Caco-2 (cell line): ENCODE measurements at regions of chr13 and their contacts with region 1.

Region 1: GRCh38 chr13:42594970-42595571 is 21.1 kb downstream of the TNFSF11 start:
- DNase-seq: peak; percentile 53 to 65
- H3K4me3 ChIP-seq: no peak overlapping the region
- H3K4me3 Mint-ChIP-seq: no peak overlapping the region
- H3K27ac Mint-ChIP-seq: no peak overlapping the region
- H3K4me1 ChIP-seq: no peaks in the 10 kb centered on the region
- H3K4me1 Mint-ChIP-seq: no peaks in the 10 kb centered on the region
- H3K27me3 ChIP-seq: no peaks in the 10 kb centered on the region
- H3K27me3 Mint-ChIP-seq: peaks cover 23% of the 10 kb centered on the region
- CTCF ChIP-seq: peak; percentile 87 to 89

Region 2: DNA sequence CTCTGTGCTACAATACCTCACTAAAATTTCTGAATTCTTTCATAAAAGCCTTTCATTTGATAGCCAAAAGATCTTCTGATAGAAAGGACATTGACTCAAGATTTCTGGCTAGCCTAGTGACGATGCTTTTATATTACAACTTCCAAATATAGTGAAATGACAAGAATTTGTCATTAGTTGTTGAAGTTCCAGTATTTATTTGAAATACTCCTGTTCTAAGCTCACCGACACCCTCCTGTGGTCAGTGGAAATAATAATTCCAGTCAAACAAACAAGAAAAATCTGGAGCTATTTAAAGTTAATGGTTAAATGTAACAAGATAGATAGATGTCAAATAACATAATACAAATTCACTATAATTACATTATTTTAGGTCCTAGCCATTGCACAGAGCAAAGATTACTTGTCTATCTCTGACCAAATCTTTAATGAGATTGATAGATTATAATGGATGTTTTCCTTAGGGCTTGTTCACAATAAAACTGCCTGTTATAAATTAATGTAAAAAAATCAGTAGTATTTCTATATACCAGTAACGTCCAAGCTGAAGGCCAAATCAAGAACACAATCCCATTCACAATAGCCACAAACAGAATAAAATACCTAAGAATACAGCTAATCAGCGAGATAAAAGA is 942.2 kb before region 1 on chr13:
- CTCF ChIA-PET with region 1: no interaction called
- POLR2A ChIA-PET with region 1: no interaction called
- intact Hi-C with region 1: no loop called
- DNase-seq: peak in 1 of 2 experiments; percentile 63
- H3K4me3 ChIP-seq: no peak overlapping the region
- H3K4me3 Mint-ChIP-seq: no peak overlapping the region
- H3K27ac Mint-ChIP-seq: peak overlapping the region; percentile 76
- H3K4me1 ChIP-seq: peaks cover 47% of the 10 kb centered on the region
- H3K4me1 Mint-ChIP-seq: peaks cover 27% of the 10 kb centered on the region
- H3K27me3 ChIP-seq: no peaks in the 10 kb centered on the region
- H3K27me3 Mint-ChIP-seq: no peaks in the 10 kb centered on the region
- CTCF ChIP-seq: peak; percentile 66 to 74

Region 3: GRCh38 chr13:42812316-42812715 is 217.2 kb after region 1 on chr13:
- CTCF ChIA-PET with region 1: no interaction called
- POLR2A ChIA-PET with region 1: no interaction called
- intact Hi-C with region 1: loop called (anchors 1 kb)
- DNase-seq: peak in 1 of 2 experiments; percentile 29
- H3K4me3 ChIP-seq: no peak overlapping the region
- H3K4me3 Mint-ChIP-seq: no peak overlapping the region
- H3K27ac Mint-ChIP-seq: no peak overlapping the region
- H3K4me1 ChIP-seq: no peaks in the 10 kb centered on the region
- H3K4me1 Mint-ChIP-seq: no peaks in the 10 kb centered on the region
- H3K27me3 ChIP-seq: no peaks in the 10 kb centered on the region
- H3K27me3 Mint-ChIP-seq: peaks cover 6% of the 10 kb centered on the region
- CTCF ChIP-seq: peak in 1 of 2 experiments; percentile 19

Region 4: DNA sequence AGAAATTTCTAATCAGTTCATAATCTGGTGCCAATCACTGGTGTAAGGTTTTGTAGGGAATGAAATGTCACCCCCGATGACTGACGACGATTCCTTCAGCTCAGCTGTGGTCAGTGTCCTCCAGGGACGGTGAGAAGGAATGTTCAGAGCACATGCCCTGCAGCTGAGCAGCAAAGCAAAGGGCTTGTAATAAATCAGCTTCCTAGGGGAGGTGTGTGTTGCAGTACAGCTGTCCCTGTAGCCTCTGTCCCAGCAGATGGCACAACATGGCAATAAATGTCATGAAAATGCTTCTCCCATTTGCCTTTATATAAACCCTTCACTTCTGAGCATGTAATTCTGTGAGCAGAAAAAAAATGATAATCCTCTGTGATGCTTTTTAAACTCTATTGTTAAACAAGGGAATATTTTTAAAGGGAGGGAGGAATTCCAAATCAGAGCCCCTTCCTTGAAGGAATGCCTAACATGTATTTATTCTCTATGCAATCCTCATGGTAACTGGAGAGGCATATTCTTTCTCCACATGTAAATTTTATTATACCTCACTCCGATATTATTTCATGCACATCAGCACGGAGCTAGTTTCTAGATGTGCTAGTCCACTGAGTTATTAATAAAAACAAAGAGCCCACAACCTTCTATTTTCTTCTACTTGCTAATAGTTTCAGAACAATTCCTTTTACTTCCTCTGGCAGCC is 288.8 kb after region 1 on chr13:
- CTCF ChIA-PET with region 1: no interaction called
- POLR2A ChIA-PET with region 1: no interaction called
- intact Hi-C with region 1: loop called (anchors 10 kb)
- DNase-seq: peak; percentile 43 to 46
- H3K4me3 ChIP-seq: no peak overlapping the region
- H3K4me3 Mint-ChIP-seq: no peak overlapping the region
- H3K27ac Mint-ChIP-seq: no peak overlapping the region
- H3K4me1 ChIP-seq: peaks cover 8% of the 10 kb centered on the region; the same call in 1 of the 2 replicates
- H3K4me1 Mint-ChIP-seq: no peaks in the 10 kb centered on the region
- H3K27me3 ChIP-seq: no peaks in the 10 kb centered on the region
- H3K27me3 Mint-ChIP-seq: no peaks in the 10 kb centered on the region
- CTCF ChIP-seq: peak in 1 of 2 experiments; percentile 51

Region 5: GRCh38 chr13:43544011-43544410 is 948.9 kb after region 1 on chr13:
- CTCF ChIA-PET with region 1: no interaction called
- POLR2A ChIA-PET with region 1: no interaction called
- intact Hi-C with region 1: no loop called
- DNase-seq: no peak
- H3K4me3 ChIP-seq: no peak overlapping the region
- H3K4me3 Mint-ChIP-seq: no peak overlapping the region
- H3K27ac Mint-ChIP-seq: no peak overlapping the region
- H3K4me1 ChIP-seq: peaks cover 62% of the 10 kb centered on the region
- H3K4me1 Mint-ChIP-seq: peaks cover 13% of the 10 kb centered on the region
- H3K27me3 ChIP-seq: no peaks in the 10 kb centered on the region
- H3K27me3 Mint-ChIP-seq: no peaks in the 10 kb centered on the region
- CTCF ChIP-seq: no peak